ENCODE measurements at regions of chr18 and their contacts with region 1.

Region 1: GRCh38 chr18:58781627-58782194 is 83.0 kb upstream of the ZNF532 start:
- DNase-seq: peak; percentile 55 to 67
- H3K4me3 ChIP-seq: no peak overlapping the region
- H3K4me3 Mint-ChIP-seq: no peak overlapping the region
- H3K27ac Mint-ChIP-seq: no peak overlapping the region
- H3K4me1 ChIP-seq: peaks cover 9% of the 10 kb centered on the region
- H3K4me1 Mint-ChIP-seq: peaks cover 16% of the 10 kb centered on the region
- H3K27me3 ChIP-seq: no peaks in the 10 kb centered on the region
- H3K27me3 Mint-ChIP-seq: no peaks in the 10 kb centered on the region
- CTCF ChIP-seq: peak; percentile 58 to 60

Region 2: GRCh38 chr18:58732471-58732870 is 49.2 kb before region 1 on chr18:
- CTCF ChIA-PET with region 1: no interaction called
- POLR2A ChIA-PET with region 1: no interaction called
- intact Hi-C with region 1: no loop called
- DNase-seq: no peak
- H3K4me3 ChIP-seq: no peak overlapping the region
- H3K4me3 Mint-ChIP-seq: no peak overlapping the region
- H3K27ac Mint-ChIP-seq: no peak overlapping the region
- H3K4me1 ChIP-seq: no peaks in the 10 kb centered on the region
- H3K4me1 Mint-ChIP-seq: no peaks in the 10 kb centered on the region
- H3K27me3 ChIP-seq: no peaks in the 10 kb centered on the region
- H3K27me3 Mint-ChIP-seq: no peaks in the 10 kb centered on the region
- CTCF ChIP-seq: no peak

Region 3: GRCh38 chr18:58863539-58864145 is 81.9 kb after region 1 on chr18:
- CTCF ChIA-PET with region 1: no interaction called
- POLR2A ChIA-PET with region 1: no interaction called
- intact Hi-C with region 1: loop called (anchors 5 kb)
- DNase-seq: peak; percentile 64 to 66
- H3K4me3 ChIP-seq: peak overlapping the region; percentile 23
- H3K4me3 Mint-ChIP-seq: peak overlapping the region; percentile 77
- H3K27ac Mint-ChIP-seq: peak overlapping the region; percentile 88
- H3K4me1 ChIP-seq: no peaks in the 10 kb centered on the region
- H3K4me1 Mint-ChIP-seq: no peaks in the 10 kb centered on the region
- H3K27me3 ChIP-seq: no peaks in the 10 kb centered on the region
- H3K27me3 Mint-ChIP-seq: no peaks in the 10 kb centered on the region
- CTCF ChIP-seq: no peak

Region 4: GRCh38 chr18:59070181-59070912 is 288.6 kb after region 1 on chr18:
- CTCF ChIA-PET with region 1: interaction called, 3 read pairs
- POLR2A ChIA-PET with region 1: no interaction called
- intact Hi-C with region 1: loop called (anchors 1 kb)
- DNase-seq: peak; percentile 68 to 79
- H3K4me3 ChIP-seq: no peak overlapping the region
- H3K4me3 Mint-ChIP-seq: no peak overlapping the region
- H3K27ac Mint-ChIP-seq: no peak overlapping the region
- H3K4me1 ChIP-seq: no peaks in the 10 kb centered on the region
- H3K4me1 Mint-ChIP-seq: peaks cover 8% of the 10 kb centered on the region
- H3K27me3 ChIP-seq: no peaks in the 10 kb centered on the region
- H3K27me3 Mint-ChIP-seq: no peaks in the 10 kb centered on the region
- CTCF ChIP-seq: peak; percentile 67 to 70